Aorta (tissue), 5 donors: ENCODE measurements at regions of chr21 and their contacts with region 1.

Region 1: DNA sequence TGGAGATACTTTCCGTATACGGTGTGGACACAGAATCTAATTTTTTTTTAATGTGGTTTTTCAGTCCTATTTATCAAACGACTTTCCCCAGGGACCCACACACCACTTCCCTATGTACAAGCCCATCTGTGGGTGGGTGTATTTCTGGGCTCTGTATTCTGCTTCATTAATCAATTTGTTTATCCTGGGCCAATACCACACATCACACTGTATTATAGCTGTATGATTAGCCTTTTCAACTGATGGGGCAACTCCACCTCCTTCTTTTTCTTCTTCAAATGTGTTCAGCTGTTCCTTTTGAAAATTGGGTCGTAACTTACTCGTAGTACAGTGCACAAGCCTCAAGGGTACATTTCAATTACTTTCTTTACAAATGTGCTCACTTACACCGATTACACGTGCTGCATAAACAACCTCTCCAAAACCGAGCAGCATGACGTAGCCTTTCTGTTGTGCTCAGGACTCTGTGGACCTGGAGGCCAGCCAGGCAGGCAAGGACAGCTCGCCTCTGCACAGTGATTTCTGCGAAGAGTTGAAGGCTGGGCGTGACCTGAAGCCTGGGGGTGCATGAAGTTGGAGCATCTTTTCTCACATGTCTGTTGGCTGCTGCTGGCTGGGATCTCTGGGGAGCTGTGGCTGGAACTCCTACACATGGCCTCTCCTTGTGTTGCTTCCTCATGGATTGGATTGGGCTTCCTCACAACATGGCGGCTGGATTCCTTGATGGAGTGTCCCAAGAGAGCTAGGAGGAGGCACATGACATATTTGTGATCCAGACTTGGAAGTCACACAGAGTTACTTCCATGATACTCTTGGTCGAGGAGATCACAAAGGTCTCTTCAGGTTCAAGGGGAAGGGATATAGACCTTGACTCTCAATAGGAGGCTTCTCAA is 126.5 kb downstream of the CRYAA start:
- DNase-seq: peak in 1 of 2 donors; percentile 10
- ATAC-seq: no peak
- H3K4me3 ChIP-seq: no peak overlapping the region
- H3K27ac ChIP-seq: no peak overlapping the region
- H3K4me1 ChIP-seq: no peaks in the 10 kb centered on the region
- H3K27me3 ChIP-seq: no peaks in the 10 kb centered on the region

Region 2: GRCh38 chr21:43367296-43367695 is 72.0 kb after region 1 on chr21:
- intact Hi-C with region 1: loop called in 1 of 2 experiments (anchors 2 kb)
- DNase-seq: no peak
- ATAC-seq: no peak
- H3K4me3 ChIP-seq: no peak overlapping the region
- H3K27ac ChIP-seq: no peak overlapping the region
- H3K4me1 ChIP-seq: no peaks in the 10 kb centered on the region
- H3K27me3 ChIP-seq: no peaks in the 10 kb centered on the region